CD8-positive, alpha-beta T cell (primary cell): ENCODE measurements at regions of chr1 and their contacts with region 1.

Region 1: DNA sequence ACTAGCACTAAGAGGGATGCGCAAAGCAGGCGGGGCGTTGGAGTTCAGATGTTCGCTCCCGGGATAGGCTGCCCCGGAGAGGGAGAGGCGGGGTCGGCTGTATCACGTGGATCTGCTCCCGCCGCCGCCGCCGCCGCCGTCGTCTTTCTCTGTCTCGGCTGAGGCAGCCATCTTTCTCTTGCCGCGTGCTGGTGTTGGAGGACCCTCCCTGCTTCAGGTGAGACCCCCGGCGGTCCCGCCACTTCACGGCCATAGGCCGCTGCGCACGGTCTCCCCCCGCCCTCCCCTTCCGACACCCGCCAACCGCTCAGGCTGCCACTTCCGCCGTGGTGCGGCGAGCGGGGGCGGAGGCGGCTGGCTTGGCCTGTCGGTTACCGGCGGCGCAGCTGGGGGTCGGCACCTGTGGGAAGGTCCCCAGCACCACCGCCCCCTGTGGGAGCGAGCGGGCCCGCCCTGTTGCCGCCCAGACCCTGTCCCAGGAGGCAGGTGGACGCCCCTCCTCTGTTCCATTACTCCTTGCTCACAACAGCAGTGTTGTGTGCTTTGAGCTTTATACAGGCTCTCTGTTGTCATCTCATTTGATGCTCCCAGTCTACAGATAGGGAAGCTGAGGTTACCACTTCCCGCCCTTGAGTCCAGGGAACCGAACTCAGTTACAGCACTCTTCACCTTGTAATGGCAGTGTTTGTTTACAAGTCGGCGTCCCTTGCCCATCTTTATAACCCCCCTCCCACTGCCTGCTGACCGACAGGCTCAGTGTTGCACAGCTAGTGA is at the start of gene BTF3L4:
- DNase-seq: peak; percentile 85 to 95 (median 92)
- ATAC-seq: peak; percentile 92
- H3K4me3 ChIP-seq: peak within 1 kb of the TSS; percentile 79 to 96
- H3K4me3 Mint-ChIP-seq: peak within 1 kb of the TSS; percentile 98
- H3K27ac ChIP-seq: peak within 1 kb of the TSS; percentile 74 to 85
- H3K27ac Mint-ChIP-seq: peak within 1 kb of the TSS; percentile 93
- H3K4me1 ChIP-seq: peaks cover 33% of the 10 kb centered on the region
- H3K4me1 Mint-ChIP-seq: peaks cover 70% of the 10 kb centered on the region
- H3K27me3 ChIP-seq: no peaks in the 10 kb centered on the region
- H3K27me3 Mint-ChIP-seq: no peaks in the 10 kb centered on the region
- CTCF ChIP-seq: no peak
- total RNA-seq, gene BTF3L4: 38.4 to 39.7 TPM

Region 2: GRCh38 chr1:51878616-51879336 is 177.6 kb before region 1 on chr1 and contains the start of gene NRDC:
- CTCF ChIA-PET with region 1: no interaction called
- POLR2A ChIA-PET with region 1: no interaction called
- intact Hi-C with region 1: loop called (anchors 1 to 2 kb)
- DNase-seq: peak; percentile 99 to 100 (median 99)
- ATAC-seq: peak; percentile 89
- H3K4me3 ChIP-seq: peak within 1 kb of the TSS; percentile 90 to 99
- H3K4me3 Mint-ChIP-seq: no peak within 1 kb of the TSS
- H3K27ac ChIP-seq: peak within 1 kb of the TSS; percentile 89 to 97
- H3K27ac Mint-ChIP-seq: no peak within 1 kb of the TSS
- H3K4me1 ChIP-seq: peaks cover 30% of the 10 kb centered on the region
- H3K4me1 Mint-ChIP-seq: peaks cover 26% of the 10 kb centered on the region
- H3K27me3 ChIP-seq: peaks cover 0 to 2% of the 10 kb centered on the region in 2 experiments
- H3K27me3 Mint-ChIP-seq: peaks cover 13% of the 10 kb centered on the region
- CTCF ChIP-seq: no peak
- total RNA-seq, gene NRDC: 47.6 to 54.3 TPM

Region 3: DNA sequence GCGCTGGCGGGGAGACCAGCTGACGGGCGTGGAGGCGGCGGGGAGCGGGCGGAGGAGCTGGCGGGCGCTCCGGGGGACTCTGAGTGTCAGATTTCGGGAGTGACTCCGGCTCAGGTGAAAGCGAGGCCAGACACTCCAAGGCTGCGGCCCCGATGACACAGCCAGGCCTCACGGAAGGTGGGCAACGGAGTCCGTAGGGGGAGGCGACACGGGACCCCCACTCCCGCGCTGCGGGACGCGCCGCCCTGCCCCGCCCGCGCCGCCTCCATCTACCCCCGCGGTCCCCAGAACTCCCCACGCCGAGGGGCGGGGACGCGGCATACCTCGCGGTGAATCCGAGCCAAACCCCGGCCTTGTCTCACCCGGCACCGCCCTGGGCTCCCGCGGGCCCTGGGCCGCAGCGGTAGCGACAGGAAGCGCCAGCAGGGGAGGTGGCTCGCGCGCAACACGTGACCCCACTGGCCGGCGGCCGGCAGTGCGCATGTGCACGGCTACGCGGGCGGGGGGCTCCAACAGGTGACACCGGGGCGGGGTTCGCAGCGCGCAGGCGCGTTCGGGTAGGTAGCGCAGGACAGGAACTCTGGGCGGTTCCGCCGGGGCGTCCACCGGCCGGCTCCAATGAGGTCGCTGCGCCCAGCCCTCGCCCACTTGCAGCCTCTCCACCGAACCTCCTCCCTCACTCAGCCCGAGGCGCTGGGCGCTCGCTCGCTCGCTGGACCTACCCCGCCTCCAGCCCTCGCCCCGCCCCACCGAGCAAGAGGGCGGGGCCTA is 309.6 kb after region 1 on chr1 and contains the start of gene CC2D1B:
- CTCF ChIA-PET with region 1: no interaction called
- POLR2A ChIA-PET with region 1: interaction called, 4 read pairs
- intact Hi-C with region 1: loop called (anchors 1 kb)
- DNase-seq: peak; percentile 98 to 100 (median 99)
- ATAC-seq: peak; percentile 79
- H3K4me3 ChIP-seq: peak within 1 kb of the TSS; percentile 82 to 89
- H3K4me3 Mint-ChIP-seq: peak within 1 kb of the TSS; percentile 90
- H3K27ac ChIP-seq: peak within 1 kb of the TSS; percentile 88 to 89
- H3K27ac Mint-ChIP-seq: peak within 1 kb of the TSS; percentile 94
- H3K4me1 ChIP-seq: peaks cover 41% of the 10 kb centered on the region
- H3K4me1 Mint-ChIP-seq: peaks cover 41% of the 10 kb centered on the region
- H3K27me3 ChIP-seq: no peaks in the 10 kb centered on the region
- H3K27me3 Mint-ChIP-seq: no peaks in the 10 kb centered on the region
- CTCF ChIP-seq: no peak
- total RNA-seq, gene CC2D1B: 38.8 to 40.6 TPM

Region 4: DNA sequence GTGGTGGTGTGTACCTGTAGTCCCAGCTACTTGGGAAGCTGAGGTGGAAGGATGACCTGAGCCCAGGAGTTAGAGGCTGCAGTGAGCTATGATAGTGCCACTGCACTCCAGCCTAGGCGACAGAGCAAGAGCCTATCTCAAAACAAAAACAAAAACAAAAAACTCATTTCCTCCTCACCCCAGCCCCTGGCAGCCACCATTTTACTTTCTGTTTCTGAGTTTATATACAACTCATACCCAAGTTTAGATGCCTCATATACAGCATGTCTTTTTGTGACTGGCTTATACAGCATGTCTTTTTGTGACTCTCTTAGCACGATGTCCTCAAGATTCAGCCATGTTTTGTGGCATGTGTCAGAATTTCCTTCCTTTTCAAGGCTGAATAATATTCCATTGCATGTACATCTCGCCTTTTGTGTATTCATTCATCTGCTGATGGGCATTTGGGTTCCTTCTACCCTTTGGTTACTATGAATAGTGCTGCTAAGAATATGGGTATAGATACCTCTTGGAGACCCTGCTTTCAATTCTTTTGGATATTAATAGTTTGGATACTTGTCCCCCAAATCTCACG is 627.1 kb after region 1 on chr1:
- CTCF ChIA-PET with region 1: no interaction called
- POLR2A ChIA-PET with region 1: no interaction called
- intact Hi-C with region 1: loop called in 1 of 2 experiments (anchors 10 kb)
- DNase-seq: no peak
- ATAC-seq: no peak
- H3K4me3 ChIP-seq: no peak overlapping the region
- H3K4me3 Mint-ChIP-seq: no peak overlapping the region
- H3K27ac ChIP-seq: no peak overlapping the region
- H3K27ac Mint-ChIP-seq: peak overlapping the region; percentile 45
- H3K4me1 ChIP-seq: peaks cover 6% of the 10 kb centered on the region
- H3K4me1 Mint-ChIP-seq: peaks cover 12% of the 10 kb centered on the region
- H3K27me3 ChIP-seq: no peaks in the 10 kb centered on the region
- H3K27me3 Mint-ChIP-seq: no peaks in the 10 kb centered on the region
- CTCF ChIP-seq: no peak

Region 5: GRCh38 chr1:53326088-53326597 is 1269.8 kb after region 1 on chr1:
- CTCF ChIA-PET with region 1: no interaction called
- POLR2A ChIA-PET with region 1: no interaction called
- intact Hi-C with region 1: loop called in 1 of 2 experiments (anchors 5 kb)
- DNase-seq: peak; percentile 78 to 94 (median 92)
- ATAC-seq: peak; percentile 89
- H3K4me3 ChIP-seq: peak overlapping the region; percentile 74 to 82
- H3K4me3 Mint-ChIP-seq: peak overlapping the region; percentile 94
- H3K27ac ChIP-seq: peak overlapping the region; percentile 26 to 66
- H3K27ac Mint-ChIP-seq: peak overlapping the region; percentile 77
- H3K4me1 ChIP-seq: peaks cover 6% of the 10 kb centered on the region
- H3K4me1 Mint-ChIP-seq: peaks cover 16% of the 10 kb centered on the region
- H3K27me3 ChIP-seq: no peaks in the 10 kb centered on the region
- H3K27me3 Mint-ChIP-seq: no peaks in the 10 kb centered on the region
- CTCF ChIP-seq: no peak